Heart right ventricle (tissue), 16 donors: ENCODE measurements at regions of chr5 and their contacts with region 1.

Region 1: GRCh38 chr5:170603578-170604565 is 100.1 kb downstream of the KCNIP1 start:
- DNase-seq: peak; percentile 38 to 53
- ATAC-seq: peak in 7 of 8 donors; percentile 39 to 68 (median 62)
- H3K4me3 ChIP-seq: no peak overlapping the region
- H3K27ac ChIP-seq: no peak overlapping the region
- H3K4me1 ChIP-seq: peaks cover 0 to 3% (median 0%) of the 10 kb centered on the region in 9 donors
- H3K27me3 ChIP-seq: peaks cover 0 to 8% (median 0%) of the 10 kb centered on the region in 7 donors
- CTCF ChIP-seq: peak; percentile 30 to 71 (median 64)

Region 2: GRCh38 chr5:170302653-170303501 is 301.0 kb before region 1 on chr5:
- intact Hi-C with region 1: no loop called
- DNase-seq: peak; percentile 62 to 66
- ATAC-seq: peak in 7 of 8 donors; percentile 22 to 55 (median 36)
- H3K4me3 ChIP-seq: peak overlapping the region in 1 of 10 donors; percentile 29
- H3K27ac ChIP-seq: peak overlapping the region in 6 of 10 donors; percentile 5 to 99 (median 61)
- H3K4me1 ChIP-seq: peaks cover 4 to 87% (median 37%) of the 10 kb centered on the region in 9 donors
- H3K27me3 ChIP-seq: no peaks in the 10 kb centered on the region
- CTCF ChIP-seq: no peak

Region 3: DNA sequence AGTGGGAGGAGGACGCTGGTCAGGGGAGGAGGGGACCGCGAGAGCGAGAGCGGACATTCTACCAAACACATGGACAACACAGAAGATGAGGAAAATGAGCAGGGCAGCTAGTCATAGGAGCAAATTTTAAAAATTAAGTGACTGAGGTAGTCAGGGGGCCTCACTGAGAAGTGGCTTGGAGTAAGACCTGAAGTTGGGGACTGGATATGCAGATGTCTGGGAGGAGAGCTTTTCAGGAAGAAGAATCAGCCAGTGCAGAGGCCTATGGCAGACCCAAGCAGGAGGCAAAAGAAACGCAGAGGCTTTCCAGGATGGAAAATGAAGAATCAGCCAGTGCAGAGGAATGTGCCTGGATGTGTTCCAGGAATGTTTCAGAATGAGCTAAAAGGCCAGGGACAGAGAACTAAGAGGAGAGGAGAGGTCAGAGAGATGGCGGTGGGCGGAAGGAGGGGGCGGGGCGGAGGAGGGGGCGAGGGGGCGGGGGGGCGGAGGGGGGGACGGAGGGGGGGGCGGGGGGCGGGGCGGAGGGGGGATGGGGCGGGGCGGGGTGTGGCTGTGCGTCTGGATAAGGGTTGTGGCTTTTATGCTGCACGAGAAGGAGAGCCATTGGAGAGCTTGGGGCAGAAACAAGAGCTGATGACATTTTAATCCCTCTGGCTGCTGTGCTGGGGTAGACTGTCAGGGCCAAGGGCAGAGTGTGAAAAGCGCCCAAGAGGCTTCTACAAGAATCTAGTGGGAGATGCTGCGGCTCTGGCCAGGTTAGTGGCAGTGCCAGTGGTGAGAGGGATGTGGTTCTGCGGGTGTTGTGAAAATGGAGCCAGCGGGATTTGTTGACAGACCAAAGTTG is 29.6 kb after region 1 on chr5:
- intact Hi-C with region 1: loop called in 2 of 10 experiments (anchors 1 kb)
- DNase-seq: peak; percentile 39 to 80
- ATAC-seq: peak; percentile 66 to 84 (median 80)
- H3K4me3 ChIP-seq: peak overlapping the region in 9 of 10 donors; percentile 18 to 47 (median 34)
- H3K27ac ChIP-seq: peak overlapping the region; percentile 40 to 83 (median 72)
- H3K4me1 ChIP-seq: peaks cover 2 to 44% (median 30%) of the 10 kb centered on the region in 9 donors
- H3K27me3 ChIP-seq: no peaks in the 10 kb centered on the region
- CTCF ChIP-seq: peak in 3 of 9 donors; percentile 4 to 26 (median 13)